ENCODE measurements at regions of chr19 and their contacts with region 1.

Region 1: GRCh38 chr19:7098701-7099596 is 29.4 kb downstream of the ZNF557 start:
- DNase-seq: peak; percentile 84
- ATAC-seq: peak; percentile 95
- H3K4me3 ChIP-seq: peak overlapping the region; percentile 76
- H3K27ac ChIP-seq: peak overlapping the region; percentile 75
- H3K4me1 ChIP-seq: peaks cover 4% of the 10 kb centered on the region; the same call in 1 of the 2 replicates
- H3K27me3 ChIP-seq: no peaks in the 10 kb centered on the region
- CTCF ChIP-seq: no peak
- EP300 ChIP-seq: no peak
- POLR2A ChIP-seq: peak; percentile 90
- RAD21 ChIP-seq: no peak

Region 2: DNA sequence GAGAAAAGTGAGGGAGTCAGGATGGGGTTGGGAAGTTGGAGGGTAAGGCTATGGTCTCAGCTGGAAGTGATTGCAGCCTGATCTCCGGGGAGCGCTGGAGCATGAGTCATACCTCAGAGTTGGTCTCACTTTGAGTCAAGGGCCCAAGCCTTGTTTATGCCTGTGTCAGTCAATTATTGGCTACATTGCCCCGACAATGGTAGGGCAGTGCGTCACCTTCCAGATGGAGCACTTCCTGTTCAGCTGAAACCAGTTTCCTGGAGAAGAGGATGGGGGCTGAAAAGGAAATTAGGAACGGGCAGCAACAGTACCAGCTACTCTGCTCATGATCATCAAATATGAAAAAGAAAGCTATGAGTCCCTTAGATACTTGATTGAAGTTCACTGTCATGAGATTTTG is 151.2 kb before region 1 on chr19:
- CTCF ChIA-PET with region 1: interaction called, 7 read pairs
- POLR2A ChIA-PET with region 1: interaction called, 4 read pairs
- RAD21 ChIA-PET with region 1: interaction called, 6 read pairs
- SMC1A ChIA-PET with region 1: interaction called, 7 read pairs
- in situ Hi-C with region 1: no loop called
- intact Hi-C with region 1: loop called (anchors 2 kb)
- DNase-seq: peak; percentile 79
- ATAC-seq: peak; percentile 98
- H3K4me3 ChIP-seq: no peak overlapping the region
- H3K27ac ChIP-seq: no peak overlapping the region
- H3K4me1 ChIP-seq: no peaks in the 10 kb centered on the region
- H3K27me3 ChIP-seq: no peaks in the 10 kb centered on the region
- CTCF ChIP-seq: no peak
- EP300 ChIP-seq: peak in 1 of 2 experiments; percentile 87; a peak in 2 of 4 replicates
- POLR2A ChIP-seq: no peak
- RAD21 ChIP-seq: no peak

Region 3: DNA sequence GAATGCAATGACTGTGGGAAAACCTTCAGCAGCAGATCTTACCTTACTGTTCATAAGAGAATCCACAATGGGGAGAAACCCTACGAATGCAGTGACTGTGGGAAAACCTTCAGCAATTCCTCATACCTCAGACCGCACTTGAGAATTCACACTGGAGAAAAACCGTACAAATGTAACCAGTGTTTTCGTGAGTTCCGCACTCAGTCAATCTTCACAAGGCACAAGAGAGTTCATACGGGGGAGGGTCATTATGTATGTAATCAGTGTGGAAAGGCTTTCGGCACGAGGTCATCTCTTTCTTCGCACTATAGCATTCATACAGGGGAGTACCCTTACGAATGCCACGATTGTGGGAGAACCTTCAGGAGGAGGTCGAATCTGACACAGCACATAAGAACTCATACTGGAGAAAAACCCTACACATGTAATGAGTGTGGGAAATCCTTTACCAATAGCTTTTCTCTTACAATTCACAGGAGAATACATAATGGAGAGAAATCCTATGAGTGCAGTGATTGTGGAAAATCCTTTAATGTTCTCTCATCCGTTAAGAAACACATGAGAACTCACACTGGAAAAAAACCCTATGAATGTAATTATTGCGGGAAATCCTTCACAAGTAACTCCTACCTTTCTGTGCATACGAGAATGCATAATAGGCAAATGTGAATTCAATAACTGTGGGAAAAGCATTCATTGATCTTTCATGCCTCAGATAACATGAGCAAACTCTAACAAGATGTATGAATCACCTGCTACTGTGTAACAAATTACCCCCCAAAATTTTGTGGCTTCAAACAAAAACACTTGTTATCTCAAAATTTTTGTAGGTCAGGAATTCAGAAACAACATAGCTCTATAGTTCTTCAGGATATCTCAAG is 15.6 kb before region 1 on chr19:
- CTCF ChIA-PET with region 1: interaction called, 4 read pairs
- POLR2A ChIA-PET with region 1: interaction called, 10 read pairs
- RAD21 ChIA-PET with region 1: no interaction called
- SMC1A ChIA-PET with region 1: no interaction called
- in situ Hi-C with region 1: no loop called
- intact Hi-C with region 1: no loop called
- DNase-seq: no peak
- ATAC-seq: no peak
- H3K4me3 ChIP-seq: no peak overlapping the region
- H3K27ac ChIP-seq: no peak overlapping the region
- H3K4me1 ChIP-seq: no peaks in the 10 kb centered on the region
- H3K27me3 ChIP-seq: no peaks in the 10 kb centered on the region
- CTCF ChIP-seq: no peak
- EP300 ChIP-seq: no peak
- POLR2A ChIP-seq: no peak
- RAD21 ChIP-seq: no peak

Region 4: DNA sequence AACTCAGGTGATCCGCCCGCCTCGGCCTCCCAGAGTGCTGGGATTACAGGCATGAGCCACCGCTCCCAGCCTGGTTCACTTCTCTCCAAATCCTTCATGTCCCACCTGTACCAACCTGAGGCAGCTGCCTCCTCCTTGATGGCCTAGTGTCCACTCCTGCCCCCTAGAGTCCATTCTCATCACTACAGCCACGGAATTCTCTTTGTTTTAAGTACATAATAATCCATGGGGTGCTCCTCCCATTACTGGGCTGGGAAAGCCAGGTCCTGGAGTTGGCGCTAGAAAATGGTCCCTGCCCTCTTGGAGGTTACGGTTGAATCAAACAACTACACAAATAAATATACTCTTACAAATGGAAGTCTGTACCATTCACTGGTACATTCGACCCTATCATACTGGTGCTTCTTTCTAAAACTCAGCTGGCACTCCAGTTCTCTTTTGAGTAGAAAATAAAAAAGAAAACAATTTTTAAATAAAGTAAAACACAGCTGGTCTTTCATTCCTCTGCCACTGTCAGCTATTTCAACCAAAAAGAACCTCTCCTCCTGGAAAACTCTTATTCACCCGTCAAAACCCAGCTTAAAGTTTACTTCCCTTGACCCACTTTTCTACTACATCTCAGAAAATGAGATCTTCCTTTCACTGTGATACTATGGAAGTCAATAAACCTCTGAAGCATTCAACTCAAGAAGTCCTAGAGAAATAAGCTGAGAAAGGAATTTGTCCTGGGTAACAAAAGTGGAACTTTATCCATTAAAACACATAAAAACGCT is 227.3 kb after region 1 on chr19:
- CTCF ChIA-PET with region 1: interaction called, 51 read pairs
- POLR2A ChIA-PET with region 1: no interaction called
- RAD21 ChIA-PET with region 1: interaction called, 16 read pairs
- SMC1A ChIA-PET with region 1: interaction called, 14 read pairs
- in situ Hi-C with region 1: no loop called
- intact Hi-C with region 1: no loop called
- DNase-seq: no peak
- ATAC-seq: peak; percentile 52; the same call in 2 of the 3 replicates
- H3K4me3 ChIP-seq: no peak overlapping the region
- H3K27ac ChIP-seq: no peak overlapping the region
- H3K4me1 ChIP-seq: no peaks in the 10 kb centered on the region
- H3K27me3 ChIP-seq: no peaks in the 10 kb centered on the region
- CTCF ChIP-seq: peak; percentile 41 to 51 (median 42); a peak in 5 of 6 replicates
- EP300 ChIP-seq: no peak
- POLR2A ChIP-seq: no peak
- RAD21 ChIP-seq: peak; percentile 65

Region 5: GRCh38 chr19:7340959-7341837 is 242.2 kb after region 1 on chr19:
- CTCF ChIA-PET with region 1: interaction called, 62 read pairs
- POLR2A ChIA-PET with region 1: interaction called, 7 read pairs
- RAD21 ChIA-PET with region 1: interaction called, 22 read pairs
- SMC1A ChIA-PET with region 1: interaction called, 41 read pairs
- in situ Hi-C with region 1: loop called (anchors 5 kb)
- intact Hi-C with region 1: loop called (anchors 1 kb)
- DNase-seq: peak; percentile 92
- ATAC-seq: peak; percentile 17
- H3K4me3 ChIP-seq: 0 out of 2 replicates have a peak overlapping the region, but pooled peaks have one; percentile 1
- H3K27ac ChIP-seq: peak overlapping the region; percentile 80
- H3K4me1 ChIP-seq: peaks cover 67% of the 10 kb centered on the region
- H3K27me3 ChIP-seq: no peaks in the 10 kb centered on the region
- CTCF ChIP-seq: peak; percentile 91 to 96 (median 95)
- EP300 ChIP-seq: peak in 1 of 2 experiments; percentile 36; a peak in 1 of 4 replicates
- POLR2A ChIP-seq: no peak
- RAD21 ChIP-seq: peak; percentile 100

Region 6: DNA sequence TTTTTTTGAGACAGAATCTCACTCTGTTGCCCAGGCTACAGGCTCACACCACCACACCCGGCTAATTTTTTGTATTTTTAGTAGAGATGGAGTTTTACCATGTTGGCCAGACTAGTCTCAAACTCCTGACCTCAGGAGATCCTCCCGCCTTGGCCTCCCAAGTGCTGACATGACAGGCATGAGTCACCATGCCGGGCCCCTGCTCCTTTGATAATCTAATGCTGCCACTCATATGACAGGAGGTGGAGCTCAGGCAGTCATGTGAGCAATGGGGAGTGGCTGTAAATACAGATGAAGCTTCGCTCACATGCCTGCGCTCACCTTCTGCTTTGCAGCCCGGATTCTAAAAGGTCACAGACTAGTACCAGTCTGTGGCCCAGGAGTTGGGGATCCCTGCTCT is 274.9 kb after region 1 on chr19:
- CTCF ChIA-PET with region 1: interaction called, 28 read pairs
- POLR2A ChIA-PET with region 1: no interaction called
- RAD21 ChIA-PET with region 1: no interaction called
- SMC1A ChIA-PET with region 1: interaction called, 10 read pairs
- in situ Hi-C with region 1: no loop called
- intact Hi-C with region 1: no loop called
- DNase-seq: no peak
- ATAC-seq: no peak
- H3K4me3 ChIP-seq: no peak overlapping the region
- H3K27ac ChIP-seq: no peak overlapping the region
- H3K4me1 ChIP-seq: no peaks in the 10 kb centered on the region
- H3K27me3 ChIP-seq: no peaks in the 10 kb centered on the region
- CTCF ChIP-seq: no peak
- EP300 ChIP-seq: no peak
- POLR2A ChIP-seq: no peak
- RAD21 ChIP-seq: no peak

Measured in GM12878 (cell line).